ENCODE measurements at regions of chr2 and their contacts with region 1.

Region 1: GRCh38 chr2:238784671-238785527 is 63.0 kb upstream of the TWIST2 start:
- DNase-seq: peak; percentile 71
- ATAC-seq: peak; percentile 69
- H3K4me3 Mint-ChIP-seq: no peak overlapping the region
- H3K27ac Mint-ChIP-seq: no peak overlapping the region
- H3K4me1 Mint-ChIP-seq: no peaks in the 10 kb centered on the region
- H3K27me3 Mint-ChIP-seq: peaks cover 3% of the 10 kb centered on the region
- CTCF ChIP-seq: peak; percentile 85

Region 2: DNA sequence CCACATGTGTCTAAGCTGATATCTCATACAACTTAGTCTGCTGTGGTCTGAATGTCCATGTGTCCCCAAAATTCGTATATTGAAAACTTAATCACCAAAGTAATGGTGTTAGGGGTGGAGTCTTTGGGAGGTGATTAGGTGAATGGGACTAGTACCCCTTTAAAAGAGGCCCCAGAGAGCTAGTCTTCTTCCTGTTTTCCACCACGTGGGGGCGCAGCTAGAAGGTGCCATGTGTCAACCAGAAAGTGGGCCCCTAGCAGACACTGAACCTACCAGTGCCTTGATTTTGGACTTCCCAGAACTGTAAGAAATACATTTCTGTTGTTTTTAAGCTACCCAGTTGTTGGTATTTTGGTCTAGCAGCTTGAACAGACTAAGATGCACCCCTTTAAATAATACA is 271.6 kb before region 1 on chr2:
- CTCF ChIA-PET with region 1: interaction called, 14 read pairs
- POLR2A ChIA-PET with region 1: no interaction called
- intact Hi-C with region 1: no loop called
- DNase-seq: peak; percentile 75
- ATAC-seq: peak; percentile 56
- H3K4me3 Mint-ChIP-seq: no peak overlapping the region
- H3K27ac Mint-ChIP-seq: no peak overlapping the region
- H3K4me1 Mint-ChIP-seq: no peaks in the 10 kb centered on the region
- H3K27me3 Mint-ChIP-seq: no peaks in the 10 kb centered on the region
- CTCF ChIP-seq: peak; percentile 47

Region 3: DNA sequence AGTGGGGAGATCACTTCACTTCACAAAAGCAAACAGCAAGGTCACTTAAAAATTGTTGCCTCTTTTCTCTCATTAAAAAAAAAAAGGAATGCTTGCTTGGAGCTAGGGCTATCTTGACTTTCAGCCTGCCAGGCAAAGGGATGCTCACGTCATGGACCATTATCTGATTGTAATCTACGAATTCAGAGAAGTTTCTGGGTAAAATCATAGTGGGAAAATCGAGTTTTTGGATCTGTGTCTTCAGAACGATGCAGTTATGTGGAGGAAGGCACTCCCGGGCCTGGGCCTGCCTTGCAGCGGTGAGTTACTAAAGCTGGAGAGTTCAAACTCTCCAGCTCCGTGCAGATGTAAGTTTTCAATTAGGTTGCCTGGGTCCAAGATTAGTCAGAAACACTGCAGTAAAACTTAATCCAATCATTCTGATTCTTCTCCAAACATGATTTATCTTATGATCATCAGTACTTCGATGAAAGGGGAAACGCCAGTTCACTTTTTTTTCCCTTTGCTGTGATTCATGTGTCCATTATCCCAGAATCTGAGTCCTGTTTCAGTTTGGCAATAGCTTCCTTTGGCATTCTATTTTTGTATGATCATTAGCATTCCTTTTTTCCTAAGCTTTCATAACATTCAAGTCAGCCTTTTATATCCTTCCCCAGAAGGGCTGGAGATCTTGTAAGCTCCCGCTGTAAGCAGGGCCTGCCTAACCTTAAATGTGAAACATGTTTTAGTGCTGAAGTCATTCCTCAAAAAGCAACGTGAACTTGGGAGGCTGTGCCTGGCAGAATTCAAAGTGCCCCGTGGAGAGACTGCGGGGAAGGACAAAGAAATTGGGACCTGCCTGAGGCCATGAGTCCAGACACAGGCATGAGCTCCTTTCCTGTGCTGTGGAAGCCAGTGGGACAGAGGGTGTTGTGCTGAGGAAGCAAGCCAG is 56.3 kb before region 1 on chr2:
- CTCF ChIA-PET with region 1: no interaction called
- POLR2A ChIA-PET with region 1: no interaction called
- intact Hi-C with region 1: no loop called
- DNase-seq: no peak
- ATAC-seq: no peak
- H3K4me3 Mint-ChIP-seq: no peak overlapping the region
- H3K27ac Mint-ChIP-seq: no peak overlapping the region
- H3K4me1 Mint-ChIP-seq: peaks cover 3% of the 10 kb centered on the region
- H3K27me3 Mint-ChIP-seq: peaks cover 7% of the 10 kb centered on the region
- CTCF ChIP-seq: no peak

Region 4: DNA sequence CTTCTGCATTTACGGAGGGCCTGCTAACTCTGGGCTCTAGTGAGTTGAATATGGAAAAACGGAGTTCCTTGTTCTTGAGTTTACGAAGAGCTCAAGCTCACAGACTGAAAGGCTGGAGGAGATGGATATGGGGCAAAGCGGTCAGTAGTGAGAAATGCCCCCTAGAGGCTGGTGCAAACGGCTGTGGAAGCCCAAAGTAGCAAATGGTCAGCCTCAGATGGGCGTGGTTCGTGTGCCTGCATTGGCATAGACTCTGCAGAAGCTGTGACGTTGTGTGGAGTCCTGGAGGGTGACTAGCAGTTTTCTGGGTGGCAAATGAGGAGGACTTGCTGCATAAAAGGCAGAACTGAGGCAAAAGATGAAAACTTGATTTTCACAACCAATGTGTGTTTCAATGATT is 30.6 kb before region 1 on chr2:
- CTCF ChIA-PET with region 1: no interaction called
- POLR2A ChIA-PET with region 1: no interaction called
- intact Hi-C with region 1: no loop called
- DNase-seq: no peak
- ATAC-seq: no peak
- H3K4me3 Mint-ChIP-seq: no peak overlapping the region
- H3K27ac Mint-ChIP-seq: no peak overlapping the region
- H3K4me1 Mint-ChIP-seq: no peaks in the 10 kb centered on the region
- H3K27me3 Mint-ChIP-seq: peaks cover 13% of the 10 kb centered on the region
- CTCF ChIP-seq: no peak

Region 5: DNA sequence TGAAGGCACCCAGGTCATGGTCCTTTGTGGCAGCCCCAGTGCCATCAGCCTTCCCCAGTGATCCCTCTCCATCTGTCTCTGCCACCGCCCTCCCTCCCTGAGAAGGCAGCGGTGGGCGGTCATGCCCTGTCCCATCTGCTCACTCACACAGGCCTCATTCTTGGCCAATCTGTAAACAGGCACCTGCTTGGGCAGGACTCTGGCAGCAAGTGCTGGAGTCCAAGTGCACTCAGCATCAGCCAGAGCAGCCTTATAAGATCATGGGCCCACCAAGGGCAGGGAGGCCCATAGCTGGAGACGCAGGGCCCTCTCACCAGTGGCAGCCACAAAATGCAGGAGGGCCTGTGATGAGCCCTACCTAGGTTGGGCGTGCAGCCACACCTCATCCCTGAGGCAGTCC is 203.9 kb after region 1 on chr2:
- CTCF ChIA-PET with region 1: no interaction called
- POLR2A ChIA-PET with region 1: no interaction called
- intact Hi-C with region 1: no loop called
- DNase-seq: no peak
- ATAC-seq: no peak
- H3K4me3 Mint-ChIP-seq: no peak overlapping the region
- H3K27ac Mint-ChIP-seq: no peak overlapping the region
- H3K4me1 Mint-ChIP-seq: no peaks in the 10 kb centered on the region
- H3K27me3 Mint-ChIP-seq: peaks cover 1% of the 10 kb centered on the region
- CTCF ChIP-seq: no peak

Region 6: DNA sequence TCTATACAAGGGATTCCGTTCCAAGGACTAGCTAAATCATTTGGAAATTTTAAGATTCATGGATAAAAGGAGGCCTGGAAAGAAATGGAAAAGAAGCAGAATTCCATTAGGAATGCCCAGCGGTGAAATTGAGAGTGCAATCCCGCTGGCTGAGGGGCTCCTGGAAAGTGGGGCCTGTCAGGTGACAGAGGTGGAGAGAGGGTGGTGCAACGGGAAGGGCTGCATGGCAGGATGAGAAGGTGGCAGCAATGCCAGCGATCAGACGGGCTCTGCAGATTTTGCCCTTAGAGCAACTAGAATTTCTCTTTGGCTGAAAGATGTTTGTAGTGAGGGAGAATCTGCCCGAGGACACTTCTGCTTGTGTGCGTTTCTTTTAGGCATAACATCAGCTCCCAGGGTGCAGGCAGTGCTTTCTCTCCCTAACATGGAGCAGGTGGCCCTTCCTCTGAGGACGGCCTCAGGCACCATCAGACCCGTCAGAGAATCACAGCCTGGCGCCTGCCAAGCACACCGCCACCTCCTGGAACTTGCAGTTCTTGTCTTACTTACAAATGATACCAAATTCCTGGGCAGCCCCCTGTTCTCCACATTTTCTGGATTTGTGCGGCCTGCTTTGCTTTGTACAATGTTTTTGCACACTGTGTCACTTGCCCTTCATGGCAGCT is 978.7 kb after region 1 on chr2:
- CTCF ChIA-PET with region 1: no interaction called
- POLR2A ChIA-PET with region 1: no interaction called
- intact Hi-C with region 1: no loop called
- DNase-seq: no peak
- ATAC-seq: no peak
- H3K4me3 Mint-ChIP-seq: no peak overlapping the region
- H3K27ac Mint-ChIP-seq: no peak overlapping the region
- H3K4me1 Mint-ChIP-seq: no peaks in the 10 kb centered on the region
- H3K27me3 Mint-ChIP-seq: no peaks in the 10 kb centered on the region
- CTCF ChIP-seq: no peak

Measured in activated CD8-positive, alpha-beta T cell treated with anti-CD3 and anti-CD28 coated beads for 36 hours (primary cell).